Activated T-helper 2 cell treated with anti-CD3 and anti-CD28 coated beads, Interferon-gamma antibody, Interleukin-2, Interleukin-4, amounts not matched to agents 10 μg/mL and 5 μg/mL and 100 μg/mL, durations not matched to agents 14 hours and 24 hours and 36 hours (primary cell): ENCODE measurements at regions of chr2 and their contacts with region 1.

Region 1: DNA sequence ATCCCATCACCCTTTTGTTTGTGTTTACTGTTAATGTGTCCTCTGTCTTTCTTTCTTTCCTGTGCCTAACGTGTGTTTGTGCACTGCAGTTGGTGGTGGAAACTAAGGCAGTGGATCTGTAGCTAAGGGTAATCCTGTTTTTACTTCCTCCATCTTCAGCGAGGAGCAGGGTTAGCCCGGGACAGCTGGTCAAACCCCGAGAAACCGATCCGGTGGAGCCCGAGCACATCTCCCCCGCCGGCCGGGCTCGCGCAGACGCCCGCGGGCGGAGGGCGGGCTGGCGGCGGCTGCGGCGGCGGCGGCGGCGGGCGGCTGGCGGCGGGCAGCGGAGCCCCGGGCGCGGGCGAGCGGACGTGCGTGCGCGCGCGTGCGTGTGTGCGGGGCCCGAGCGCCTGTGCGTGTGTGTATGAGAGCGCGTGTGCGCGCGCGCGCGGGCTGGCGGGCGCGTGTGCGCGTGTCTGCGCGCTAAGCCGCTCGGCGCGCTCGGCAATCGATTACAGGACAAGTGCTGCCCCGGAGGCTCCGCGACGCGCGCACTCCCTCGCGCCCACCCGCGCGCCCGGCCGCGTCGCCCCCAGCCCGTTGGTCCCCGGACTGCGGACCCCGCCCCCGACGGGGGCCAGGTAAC is at the start of gene IKZF2:
- DNase-seq: peak; percentile 64
- H3K4me3 Mint-ChIP-seq: peak within 1 kb of the TSS; percentile 86
- H3K27ac Mint-ChIP-seq: peak within 1 kb of the TSS; percentile 84
- H3K4me1 Mint-ChIP-seq: peaks cover 37% of the 10 kb centered on the region
- H3K27me3 Mint-ChIP-seq: peaks cover 60% of the 10 kb centered on the region
- total RNA-seq, gene IKZF2: 13.4 and 17.2 TPM in 2 replicates

Region 2: DNA sequence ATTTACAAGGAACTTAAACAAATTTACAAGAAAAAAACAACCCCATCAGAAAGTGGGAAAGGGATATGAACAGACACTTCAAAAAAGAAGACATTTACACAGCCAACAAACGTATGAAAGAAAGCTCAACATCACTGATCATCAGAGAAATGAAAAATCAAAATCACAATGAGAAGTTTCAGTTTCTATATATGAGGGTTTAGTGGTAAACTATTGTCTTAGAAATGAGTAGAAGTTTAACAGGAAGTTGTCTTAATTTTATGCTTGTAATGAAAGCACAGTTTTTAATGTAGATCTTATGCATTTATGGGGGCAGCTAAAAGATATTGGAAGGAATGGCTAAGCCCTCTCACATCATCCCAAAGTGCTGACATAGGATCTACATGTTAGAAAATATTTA is 938.4 kb before region 1 on chr2:
- intact Hi-C with region 1: no loop called
- DNase-seq: no peak
- H3K4me3 Mint-ChIP-seq: no peak overlapping the region
- H3K27ac Mint-ChIP-seq: no peak overlapping the region
- H3K4me1 Mint-ChIP-seq: no peaks in the 10 kb centered on the region
- H3K27me3 Mint-ChIP-seq: no peaks in the 10 kb centered on the region

Region 3: DNA sequence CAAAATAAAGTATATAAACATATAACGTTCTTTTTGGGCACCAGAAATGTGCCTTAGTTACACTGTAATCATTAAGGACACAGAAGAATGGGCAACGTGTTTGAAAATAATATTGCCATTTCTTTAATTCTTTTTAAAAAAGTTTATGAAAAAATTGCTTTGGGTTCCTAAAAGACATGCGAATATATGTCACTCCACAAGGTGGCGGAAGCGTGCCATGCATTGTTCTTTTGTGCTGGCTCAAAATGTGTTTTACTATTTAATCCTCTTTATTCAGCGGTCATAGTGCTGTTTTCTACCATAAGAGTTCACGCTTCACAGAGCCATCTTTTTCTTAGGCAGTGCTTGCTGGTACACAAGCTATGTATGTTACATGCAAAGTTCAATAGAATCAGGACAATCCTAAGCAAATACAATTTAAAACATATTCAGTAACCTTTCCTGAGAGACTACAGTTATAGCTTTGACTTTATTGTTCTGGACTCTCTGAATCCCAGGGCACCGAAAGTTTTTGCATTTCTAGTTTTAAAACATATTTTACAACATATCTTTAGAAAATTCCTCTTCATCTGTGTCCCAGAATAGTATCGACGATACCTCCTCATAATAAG is 465.2 kb before region 1 on chr2:
- intact Hi-C with region 1: loop called (anchors 1 kb)
- DNase-seq: peak; percentile 17
- H3K4me3 Mint-ChIP-seq: no peak overlapping the region
- H3K27ac Mint-ChIP-seq: no peak overlapping the region
- H3K4me1 Mint-ChIP-seq: no peaks in the 10 kb centered on the region
- H3K27me3 Mint-ChIP-seq: peaks cover 4% of the 10 kb centered on the region

Region 4: GRCh38 chr2:212863185-212863588 is 288.4 kb before region 1 on chr2:
- intact Hi-C with region 1: loop called (anchors 1 kb)
- DNase-seq: peak; percentile 12
- H3K4me3 Mint-ChIP-seq: no peak overlapping the region
- H3K27ac Mint-ChIP-seq: no peak overlapping the region
- H3K4me1 Mint-ChIP-seq: peaks cover 3% of the 10 kb centered on the region
- H3K27me3 Mint-ChIP-seq: no peaks in the 10 kb centered on the region

Region 5: DNA sequence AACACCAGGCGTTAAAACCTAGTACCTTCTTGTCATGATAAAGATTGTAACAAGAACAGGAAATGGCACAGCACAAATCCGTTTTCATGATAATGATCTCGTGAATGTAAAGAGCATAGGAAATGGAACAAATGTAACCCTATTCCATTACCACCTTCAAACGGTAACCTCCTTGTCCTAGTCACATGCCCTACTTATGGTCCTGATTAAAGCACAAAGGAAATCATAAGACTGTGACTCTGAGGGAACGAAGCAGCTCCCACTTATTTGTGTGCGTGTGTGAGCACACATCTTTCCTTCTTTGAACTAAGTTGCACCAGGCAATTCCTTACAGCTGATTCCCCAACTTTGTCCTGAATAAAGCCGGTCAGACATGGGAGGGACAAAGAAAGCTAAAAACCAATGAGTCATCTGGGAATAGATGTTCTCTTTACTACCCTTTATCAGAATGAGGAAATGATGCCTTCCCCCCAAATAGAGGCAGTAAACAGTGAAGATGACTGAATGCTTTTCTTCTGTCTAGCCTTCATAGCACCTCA is 192.7 kb before region 1 on chr2:
- intact Hi-C with region 1: loop called (anchors 5 kb)
- DNase-seq: no peak
- H3K4me3 Mint-ChIP-seq: peak overlapping the region; percentile 19
- H3K27ac Mint-ChIP-seq: peak overlapping the region; percentile 75
- H3K4me1 Mint-ChIP-seq: peaks cover 46% of the 10 kb centered on the region
- H3K27me3 Mint-ChIP-seq: no peaks in the 10 kb centered on the region

Region 6: GRCh38 chr2:213065583-213066442 is 85.7 kb before region 1 on chr2:
- intact Hi-C with region 1: loop called (anchors 5 kb)
- DNase-seq: no peak
- H3K4me3 Mint-ChIP-seq: peak overlapping the region; percentile 28
- H3K27ac Mint-ChIP-seq: no peak overlapping the region
- H3K4me1 Mint-ChIP-seq: peaks cover 27% of the 10 kb centered on the region
- H3K27me3 Mint-ChIP-seq: peaks cover 36% of the 10 kb centered on the region

Region 7: DNA sequence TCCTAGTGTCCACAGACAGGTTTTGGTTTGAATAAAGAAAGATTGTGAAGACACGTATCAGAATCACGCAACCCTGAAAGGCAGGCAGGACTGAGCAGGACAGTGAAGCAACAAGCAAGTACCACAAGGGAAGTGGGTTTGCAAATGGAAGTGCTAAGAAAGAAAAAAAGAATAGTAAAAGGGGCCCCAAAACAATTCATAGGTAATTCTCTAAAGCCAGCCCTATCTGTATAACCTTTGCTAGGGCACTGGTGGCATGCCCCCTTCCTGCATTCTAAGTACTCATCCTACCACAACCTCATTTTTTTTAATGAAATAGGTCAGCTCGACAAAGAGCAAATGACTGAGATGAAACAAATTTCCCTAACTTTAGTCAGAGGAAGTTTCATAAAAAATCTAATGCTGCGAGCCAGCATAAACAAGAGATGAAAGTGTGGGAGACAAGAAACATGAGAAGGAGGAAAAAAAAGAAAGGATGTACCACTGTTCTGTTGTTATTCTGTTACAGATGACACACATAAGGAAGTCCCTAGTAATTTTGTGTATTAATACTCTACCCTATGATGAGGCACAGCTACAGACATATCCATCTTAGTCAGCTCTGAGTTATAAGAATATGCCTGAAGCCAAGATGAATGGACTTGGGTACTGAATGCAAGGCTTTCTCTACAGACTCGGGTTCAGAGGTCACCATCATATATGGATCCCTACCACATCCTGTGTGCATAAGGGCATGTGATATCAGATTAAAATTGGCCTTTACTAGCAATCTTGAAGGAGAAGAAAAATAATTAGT is 32.3 kb before region 1 on chr2:
- intact Hi-C with region 1: loop called (anchors 1 kb)
- DNase-seq: no peak
- H3K4me3 Mint-ChIP-seq: peak overlapping the region; percentile 63
- H3K27ac Mint-ChIP-seq: peak overlapping the region; percentile 95
- H3K4me1 Mint-ChIP-seq: peaks cover 50% of the 10 kb centered on the region
- H3K27me3 Mint-ChIP-seq: peaks cover 4% of the 10 kb centered on the region

Region 8: GRCh38 chr2:213175526-213176162 is 24.1 kb after region 1 on chr2:
- intact Hi-C with region 1: no loop called
- DNase-seq: no peak
- H3K4me3 Mint-ChIP-seq: no peak overlapping the region
- H3K27ac Mint-ChIP-seq: no peak overlapping the region
- H3K4me1 Mint-ChIP-seq: peaks cover 1% of the 10 kb centered on the region
- H3K27me3 Mint-ChIP-seq: peaks cover 9% of the 10 kb centered on the region

Region 9: GRCh38 chr2:213284105-213285090 is 132.8 kb after region 1 on chr2 and contains the start of gene SPAG16:
- intact Hi-C with region 1: loop called (anchors 1 kb)
- DNase-seq: peak; percentile 97
- H3K4me3 Mint-ChIP-seq: peak within 1 kb of the TSS; percentile 90
- H3K27ac Mint-ChIP-seq: peak within 1 kb of the TSS; percentile 84
- H3K4me1 Mint-ChIP-seq: peaks cover 26% of the 10 kb centered on the region
- H3K27me3 Mint-ChIP-seq: peaks cover 4% of the 10 kb centered on the region
- total RNA-seq, gene SPAG16: 7.5 and 8.0 TPM in 2 replicates